ENCODE measurements at regions of chr19 and their contacts with region 1.

Region 1: GRCh38 chr19:14048443-14049153 is 13.3 kb downstream of the PALM3 start:
- DNase-seq: peak; percentile 92
- ATAC-seq: peak; percentile 98
- H3K4me3 Mint-ChIP-seq: no peak overlapping the region
- H3K27ac Mint-ChIP-seq: no peak overlapping the region
- H3K4me1 Mint-ChIP-seq: no peaks in the 10 kb centered on the region
- H3K27me3 Mint-ChIP-seq: no peaks in the 10 kb centered on the region
- CTCF ChIP-seq: peak; percentile 89

Region 2: GRCh38 chr19:13872695-13873389 is 175.8 kb before region 1 on chr19:
- CTCF ChIA-PET with region 1: interaction called, 11 read pairs
- POLR2A ChIA-PET with region 1: no interaction called
- DNase-seq: peak; percentile 89
- ATAC-seq: peak; percentile 97
- H3K4me3 Mint-ChIP-seq: peak overlapping the region; percentile 56
- H3K27ac Mint-ChIP-seq: no peak overlapping the region
- H3K4me1 Mint-ChIP-seq: peaks cover 7% of the 10 kb centered on the region
- H3K27me3 Mint-ChIP-seq: peaks cover 98% of the 10 kb centered on the region
- CTCF ChIP-seq: no peak

Region 3: DNA sequence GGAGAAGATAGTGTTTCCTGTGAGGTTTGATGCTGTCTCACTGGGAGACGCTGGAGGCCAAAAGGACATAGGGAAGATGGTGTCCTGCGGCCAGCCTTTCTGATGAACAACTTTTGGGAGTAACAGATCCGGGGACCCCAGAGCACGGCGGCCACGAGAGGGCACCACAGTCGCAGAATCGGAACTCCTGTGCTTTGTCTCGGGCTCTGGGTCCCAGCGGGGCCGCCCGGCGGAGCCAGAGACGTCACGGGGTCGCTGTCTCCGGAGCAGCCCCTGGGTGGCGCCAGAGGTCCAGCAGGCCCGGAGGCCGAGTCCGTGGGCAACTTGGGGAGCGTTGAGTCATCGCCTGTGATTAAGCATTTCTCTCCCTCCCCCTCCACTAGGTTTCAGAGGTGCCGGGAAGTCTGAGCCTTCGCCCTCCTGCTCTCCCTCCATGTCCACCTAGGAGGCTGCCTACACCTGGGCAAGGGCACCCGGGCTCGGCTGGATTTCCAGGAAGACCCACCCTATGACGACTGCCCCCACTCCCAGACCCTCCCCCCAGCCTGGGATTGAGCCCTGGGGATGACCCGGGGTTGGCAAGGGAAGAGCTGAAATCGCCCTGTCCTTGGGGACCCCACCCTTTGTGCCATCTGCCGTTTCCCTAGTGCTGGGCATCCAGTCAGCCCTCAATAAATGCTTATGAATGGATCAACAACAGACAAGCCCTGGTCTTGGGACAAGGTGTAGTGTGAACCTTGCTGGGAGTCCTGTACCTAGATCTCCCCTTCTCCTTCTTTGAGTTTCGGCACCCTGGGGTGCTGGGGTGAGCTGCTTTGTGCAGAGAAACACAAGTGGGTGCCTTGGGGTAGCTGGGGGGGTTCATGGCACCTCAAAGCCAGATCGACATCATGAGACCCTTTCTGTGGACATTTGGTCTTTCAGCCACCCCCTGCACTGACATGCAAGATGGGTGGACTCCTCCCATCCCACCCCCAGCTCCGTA is 168.2 kb before region 1 on chr19:
- CTCF ChIA-PET with region 1: interaction called, 28 read pairs
- POLR2A ChIA-PET with region 1: interaction called, 3 read pairs
- DNase-seq: peak; percentile 98
- ATAC-seq: peak; percentile 83
- H3K4me3 Mint-ChIP-seq: peak overlapping the region; percentile 41
- H3K27ac Mint-ChIP-seq: peak overlapping the region; percentile 82
- H3K4me1 Mint-ChIP-seq: peaks cover 26% of the 10 kb centered on the region
- H3K27me3 Mint-ChIP-seq: peaks cover 36% of the 10 kb centered on the region
- CTCF ChIP-seq: peak; percentile 88

Region 4: GRCh38 chr19:13932911-13933393 is 115.6 kb before region 1 on chr19:
- CTCF ChIA-PET with region 1: interaction called, 13 read pairs
- POLR2A ChIA-PET with region 1: no interaction called
- DNase-seq: peak; percentile 23
- ATAC-seq: no peak
- H3K4me3 Mint-ChIP-seq: no peak overlapping the region
- H3K27ac Mint-ChIP-seq: peak overlapping the region; percentile 59; the same call in 1 of the 2 replicates
- H3K4me1 Mint-ChIP-seq: peaks cover 29% of the 10 kb centered on the region
- H3K27me3 Mint-ChIP-seq: no peaks in the 10 kb centered on the region
- CTCF ChIP-seq: no peak

Region 5: GRCh38 chr19:13959962-13960862 is 88.4 kb before region 1 on chr19:
- CTCF ChIA-PET with region 1: interaction called, 17 read pairs
- POLR2A ChIA-PET with region 1: no interaction called
- DNase-seq: peak; percentile 61
- ATAC-seq: peak; percentile 9
- H3K4me3 Mint-ChIP-seq: no peak overlapping the region
- H3K27ac Mint-ChIP-seq: peak overlapping the region; percentile 87
- H3K4me1 Mint-ChIP-seq: peaks cover 6% of the 10 kb centered on the region
- H3K27me3 Mint-ChIP-seq: peaks cover 3% of the 10 kb centered on the region
- CTCF ChIP-seq: peak; percentile 8; the same call in 1 of the 2 replicates

Region 6: GRCh38 chr19:13978347-13978733 is 70.3 kb before region 1 on chr19:
- CTCF ChIA-PET with region 1: interaction called, 23 read pairs
- POLR2A ChIA-PET with region 1: no interaction called
- DNase-seq: peak; percentile 99
- ATAC-seq: peak; percentile 93
- H3K4me3 Mint-ChIP-seq: peak overlapping the region; percentile 49
- H3K27ac Mint-ChIP-seq: peak overlapping the region; percentile 27; the same call in 1 of the 2 replicates
- H3K4me1 Mint-ChIP-seq: peaks cover 22% of the 10 kb centered on the region
- H3K27me3 Mint-ChIP-seq: no peaks in the 10 kb centered on the region; the same call in 1 of the 2 replicates
- CTCF ChIP-seq: no peak

Region 7: DNA sequence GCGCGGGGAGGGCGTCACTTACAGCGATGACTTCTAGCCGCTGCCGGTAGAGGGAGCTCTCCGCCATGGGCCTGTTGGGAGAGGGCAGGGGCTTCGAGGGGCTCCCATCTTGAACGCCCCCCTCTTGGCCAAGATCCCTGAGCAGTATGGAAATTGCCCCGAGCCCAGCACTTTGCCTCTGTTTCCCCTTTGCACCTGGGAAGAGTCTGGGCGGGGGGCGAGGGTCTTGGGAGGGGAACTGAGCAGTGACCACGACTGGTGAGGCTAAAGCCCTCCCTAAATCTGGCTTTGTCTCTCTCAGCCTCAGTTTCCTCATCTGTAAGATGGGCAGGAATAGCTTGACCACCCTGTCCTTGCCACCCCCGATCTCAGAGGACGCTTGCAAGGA is 10.5 kb after region 1 on chr19:
- CTCF ChIA-PET with region 1: interaction called, 187 read pairs
- POLR2A ChIA-PET with region 1: interaction called, 5 read pairs
- DNase-seq: peak; percentile 78
- ATAC-seq: peak; percentile 50
- H3K4me3 Mint-ChIP-seq: peak overlapping the region; percentile 86
- H3K27ac Mint-ChIP-seq: no peak overlapping the region
- H3K4me1 Mint-ChIP-seq: peaks cover 16% of the 10 kb centered on the region
- H3K27me3 Mint-ChIP-seq: peaks cover 32% of the 10 kb centered on the region
- CTCF ChIP-seq: peak; percentile 87